HEK293T (cell line): ENCODE measurements at regions of chr17 and their contacts with region 1.

Region 1: GRCh38 chr17:69404382-69404781 is 10.1 kb upstream of the MAP2K6 start:
- DNase-seq: no peak

Region 2: GRCh38 chr17:69375229-69375628 is 29.2 kb before region 1 on chr17:
- CTCF ChIA-PET with region 1: no interaction called
- POLR2A ChIA-PET with region 1: no interaction called
- DNase-seq: no peak

Region 3: DNA sequence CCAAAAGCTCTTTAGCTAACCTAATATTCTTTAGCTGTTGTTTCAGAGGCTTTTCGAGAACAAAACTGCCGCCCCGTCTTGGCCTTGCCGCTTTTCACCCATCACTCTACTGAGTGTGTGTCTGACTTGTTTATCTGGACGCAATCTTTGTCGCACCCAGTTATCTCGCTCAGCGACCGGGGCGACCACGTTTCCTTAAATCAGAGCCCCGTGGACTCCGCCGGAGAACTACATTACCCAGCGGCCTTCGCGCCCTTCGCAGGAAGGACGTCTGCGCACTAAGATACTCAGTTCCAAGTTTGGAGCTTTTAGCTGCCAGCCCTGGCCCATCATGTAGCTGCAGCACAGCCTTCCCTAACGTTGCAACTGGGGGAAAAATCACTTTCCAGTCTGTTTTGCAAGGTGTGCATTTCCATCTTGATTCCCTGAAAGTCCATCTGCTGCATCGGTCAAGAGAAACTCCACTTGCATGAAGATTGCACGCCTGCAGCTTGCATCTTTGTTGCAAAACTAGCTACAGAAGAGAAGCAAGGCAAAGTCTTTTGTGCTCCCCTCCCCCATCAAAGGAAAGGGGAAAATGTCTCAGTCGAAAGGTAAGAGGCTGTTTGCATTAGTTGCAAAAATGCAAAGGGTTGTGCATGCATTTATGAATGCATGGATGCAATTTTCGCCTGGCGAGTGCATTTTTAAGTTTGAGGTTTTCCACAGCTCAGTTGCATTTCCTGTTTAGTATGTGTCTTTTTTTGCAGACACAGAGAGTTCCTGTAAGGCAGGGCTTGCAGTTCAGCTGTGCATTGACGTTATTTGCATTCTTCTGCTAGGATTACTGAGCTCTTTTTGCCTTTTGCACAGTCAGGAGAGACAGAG is 10.3 kb after region 1 on chr17 and contains the start of gene MAP2K6:
- CTCF ChIA-PET with region 1: no interaction called
- POLR2A ChIA-PET with region 1: interaction called, 15 read pairs
- DNase-seq: peak; percentile 83

Region 4: DNA sequence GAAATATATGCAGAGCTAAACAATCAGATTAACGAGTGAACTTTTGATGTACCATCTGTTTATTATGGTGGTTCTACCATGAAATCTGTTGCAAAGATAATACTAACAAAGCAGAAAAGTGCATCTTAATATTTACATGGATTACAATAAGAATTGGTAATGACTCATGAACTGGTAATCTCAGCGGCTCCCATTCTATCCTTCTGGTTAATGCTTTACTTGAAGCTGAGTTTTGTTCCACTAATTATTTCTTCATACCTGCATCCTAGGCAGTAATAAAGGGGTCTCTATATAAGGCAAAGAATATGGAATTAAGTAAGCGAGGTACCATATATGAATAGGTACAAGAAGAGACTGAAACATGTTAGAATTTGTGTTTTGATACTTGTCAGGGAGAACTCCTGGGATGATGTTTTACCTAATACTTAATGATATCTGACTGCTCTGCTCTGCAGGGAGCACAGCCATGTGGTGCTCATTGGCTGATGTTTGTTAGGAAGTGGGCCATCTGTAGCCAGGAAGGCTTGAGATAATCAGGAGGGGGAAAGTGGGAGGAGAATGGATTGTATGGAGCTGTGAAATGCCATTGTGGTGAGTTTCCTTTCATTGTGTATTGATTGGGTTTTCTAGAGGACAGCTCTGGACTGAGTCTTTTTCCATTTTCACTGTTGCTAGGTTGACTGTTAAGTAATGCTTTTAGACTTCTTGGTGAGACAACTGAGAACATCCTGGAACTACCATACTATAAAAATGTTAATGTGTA is 62.7 kb after region 1 on chr17:
- CTCF ChIA-PET with region 1: no interaction called
- POLR2A ChIA-PET with region 1: no interaction called
- DNase-seq: no peak